Astrocyte of the cerebellum (primary cell): ENCODE measurements at regions of chr6 and their contacts with region 1.

Region 1: GRCh38 chr6:151179321-151179720 is 60.4 kb upstream of the AKAP12 start:
- DNase-seq: peak; percentile 90
- H3K4me3 ChIP-seq: no peak overlapping the region
- CTCF ChIP-seq: no peak

Region 2: DNA sequence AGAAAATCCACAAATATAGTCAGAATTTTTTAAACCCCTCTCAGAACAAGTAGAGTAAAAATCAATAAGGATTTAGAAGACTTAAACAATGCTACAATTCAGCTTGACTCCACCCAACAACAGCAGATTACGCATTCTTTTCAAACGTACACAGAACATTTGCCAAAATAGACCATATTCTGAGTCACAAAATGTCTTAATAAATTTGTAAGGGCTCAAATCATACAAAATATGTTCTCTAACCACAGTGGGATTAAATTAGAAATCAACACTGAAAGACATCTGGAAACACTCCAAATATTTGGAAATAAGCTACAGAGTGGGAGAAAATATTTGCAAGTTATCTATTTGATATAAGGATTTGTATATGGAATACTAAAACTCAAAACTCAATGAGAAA is 103.8 kb before region 1 on chr6:
- in situ Hi-C with region 1: no loop called
- DNase-seq: no peak
- H3K4me3 ChIP-seq: no peak overlapping the region
- CTCF ChIP-seq: no peak

Region 3: GRCh38 chr6:151098166-151098565 is 81.2 kb before region 1 on chr6:
- in situ Hi-C with region 1: loop called (anchors 5 kb)
- DNase-seq: no peak
- H3K4me3 ChIP-seq: no peak overlapping the region
- CTCF ChIP-seq: no peak

Region 4: GRCh38 chr6:151240036-151240685 is 60.8 kb after region 1 on chr6:
- in situ Hi-C with region 1: no loop called
- DNase-seq: peak; percentile 62
- H3K4me3 ChIP-seq: peak overlapping the region; percentile 87
- CTCF ChIP-seq: no peak